Activated CD4-positive, alpha-beta T cell treated with anti-CD3 and anti-CD28 coated beads for 36 hours (primary cell): ENCODE measurements at regions of chr18 and their contacts with region 1.

Region 1: DNA sequence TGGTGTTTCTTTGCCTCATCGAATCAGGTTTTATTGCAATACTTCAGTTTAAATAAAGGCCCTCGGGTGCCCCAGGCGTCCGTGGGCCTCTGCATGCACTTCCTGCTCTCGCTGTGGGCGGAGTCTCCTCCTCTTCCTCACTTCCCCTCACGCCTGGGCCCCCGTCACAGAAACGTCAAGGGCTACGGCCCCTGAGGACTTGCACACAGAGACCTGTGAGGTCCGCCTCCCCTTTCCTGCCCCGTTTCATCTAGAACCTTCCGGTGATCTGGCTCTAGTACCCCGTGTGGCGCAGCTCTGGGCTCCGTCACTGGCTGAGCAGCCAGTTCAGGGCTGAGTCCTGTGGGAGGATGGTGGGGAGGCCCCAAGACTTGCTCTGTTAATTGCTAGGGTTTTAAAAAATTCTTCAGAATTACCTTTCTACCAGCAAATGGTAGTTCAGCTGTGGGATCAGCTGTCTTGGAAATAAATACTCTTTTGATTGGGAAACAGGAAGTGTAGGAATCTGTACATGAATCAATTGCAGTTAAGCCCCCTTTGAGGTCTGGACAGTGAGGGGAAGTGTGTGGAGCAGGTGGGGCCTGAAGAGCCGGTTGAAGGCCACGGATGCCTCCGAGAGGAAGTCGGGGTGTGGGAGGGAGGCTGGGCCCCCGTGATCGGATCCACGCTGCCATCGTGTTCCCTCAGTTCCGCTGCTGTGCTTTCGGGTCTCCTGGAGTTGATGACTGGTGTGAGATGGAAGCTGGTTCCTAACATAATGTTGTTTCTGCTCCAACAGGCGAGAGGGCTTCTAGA is 10.2 kb downstream of the NFATC1 start:
- DNase-seq: peak; percentile 94
- ATAC-seq: peak; percentile 86
- H3K4me3 Mint-ChIP-seq: peak overlapping the region; percentile 83
- H3K27ac Mint-ChIP-seq: peak overlapping the region; percentile 96
- H3K4me1 Mint-ChIP-seq: peaks cover 65% of the 10 kb centered on the region
- H3K27me3 Mint-ChIP-seq: no peaks in the 10 kb centered on the region

Region 2: GRCh38 chr18:78701771-78702396 is 704.1 kb before region 1 on chr18:
- CTCF ChIA-PET with region 1: no interaction called
- POLR2A ChIA-PET with region 1: no interaction called
- intact Hi-C with region 1: no loop called
- DNase-seq: no peak
- ATAC-seq: no peak
- H3K4me3 Mint-ChIP-seq: no peak overlapping the region
- H3K27ac Mint-ChIP-seq: no peak overlapping the region
- H3K4me1 Mint-ChIP-seq: no peaks in the 10 kb centered on the region
- H3K27me3 Mint-ChIP-seq: peaks cover 10% of the 10 kb centered on the region

Region 3: DNA sequence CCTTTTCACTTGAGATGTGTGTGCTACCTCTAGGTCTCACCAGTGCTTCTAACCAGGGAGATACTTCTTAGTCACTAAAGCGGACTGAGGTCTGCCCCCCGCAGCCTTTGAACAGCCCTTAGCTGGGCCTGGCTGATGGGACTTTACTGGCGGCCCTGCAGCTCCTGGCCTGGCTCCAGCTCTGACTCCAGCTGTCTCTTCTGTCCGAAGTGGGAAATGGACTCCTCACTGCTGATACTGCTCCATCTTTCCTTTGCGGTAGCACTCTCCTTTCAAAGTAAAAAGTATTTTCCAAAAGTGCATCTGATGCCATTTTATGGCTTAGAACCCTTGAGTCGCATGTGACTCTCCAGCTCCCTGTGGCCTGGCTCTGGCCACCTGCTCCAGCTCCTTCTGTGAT is 272.3 kb before region 1 on chr18:
- CTCF ChIA-PET with region 1: no interaction called
- POLR2A ChIA-PET with region 1: no interaction called
- intact Hi-C with region 1: no loop called
- DNase-seq: no peak
- ATAC-seq: no peak
- H3K4me3 Mint-ChIP-seq: no peak overlapping the region
- H3K27ac Mint-ChIP-seq: no peak overlapping the region
- H3K4me1 Mint-ChIP-seq: peaks cover 2% of the 10 kb centered on the region
- H3K27me3 Mint-ChIP-seq: no peaks in the 10 kb centered on the region

Region 4: DNA sequence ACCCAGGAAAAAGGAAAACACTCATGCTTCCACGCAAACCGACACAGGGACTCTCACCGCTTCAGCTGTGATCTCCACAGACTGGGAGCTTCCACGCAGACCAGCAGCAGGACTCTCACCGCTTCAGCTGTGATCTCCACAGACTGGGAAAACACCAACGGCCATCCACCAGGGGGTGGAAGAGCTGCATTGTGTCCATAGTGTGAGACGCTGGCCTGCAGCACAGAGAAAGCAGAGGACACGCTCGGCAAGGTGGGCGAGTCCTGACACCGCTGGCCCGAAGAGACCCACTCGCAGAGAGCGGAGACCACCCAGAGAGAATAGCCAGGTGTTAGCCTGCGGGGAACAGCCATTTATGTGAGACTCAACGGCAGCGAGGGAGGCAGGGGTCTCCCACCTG is 52.7 kb before region 1 on chr18:
- CTCF ChIA-PET with region 1: no interaction called
- POLR2A ChIA-PET with region 1: no interaction called
- intact Hi-C with region 1: no loop called
- DNase-seq: no peak
- ATAC-seq: no peak
- H3K4me3 Mint-ChIP-seq: no peak overlapping the region
- H3K27ac Mint-ChIP-seq: no peak overlapping the region
- H3K4me1 Mint-ChIP-seq: no peaks in the 10 kb centered on the region
- H3K27me3 Mint-ChIP-seq: no peaks in the 10 kb centered on the region

Region 5: DNA sequence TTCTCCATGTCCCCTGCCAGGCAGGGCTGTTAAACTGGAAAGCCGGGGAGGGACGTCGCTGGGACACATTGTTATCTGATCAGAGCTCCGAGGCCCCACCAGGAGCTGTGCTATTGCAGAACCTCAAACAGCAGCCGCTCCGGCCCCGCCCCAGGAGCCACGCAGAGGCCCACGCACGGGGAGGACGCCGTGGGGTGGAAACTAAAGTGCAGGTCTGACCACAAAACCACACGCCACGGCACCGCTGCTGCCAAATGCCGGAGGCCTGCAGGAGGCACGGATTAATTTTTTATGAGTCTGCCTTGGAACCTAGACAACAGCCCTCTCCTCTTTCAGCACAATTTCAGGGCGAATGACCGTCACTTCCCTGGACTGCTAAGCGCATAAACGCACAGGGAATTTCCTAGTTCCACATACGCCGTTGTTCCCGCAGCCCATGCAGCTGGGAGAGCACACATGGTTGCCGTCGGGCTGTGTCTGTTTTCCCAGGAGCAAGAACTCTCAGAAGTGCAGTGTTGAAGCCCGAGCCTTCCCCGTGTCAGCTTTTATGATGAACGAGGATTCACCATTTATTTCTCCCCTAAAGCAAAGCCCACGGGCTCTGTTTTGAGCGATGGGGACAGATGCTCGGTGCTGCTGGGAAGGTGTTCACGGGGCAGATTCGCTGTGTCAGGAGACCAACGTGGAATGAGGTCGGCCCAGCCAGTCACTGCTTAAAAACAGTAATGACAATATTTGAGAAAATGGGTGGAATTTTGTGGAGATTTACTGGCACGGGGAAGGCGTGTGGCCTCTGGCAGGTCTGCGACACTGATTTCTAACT is 33.4 kb after region 1 on chr18:
- CTCF ChIA-PET with region 1: interaction called, 7 read pairs
- POLR2A ChIA-PET with region 1: interaction called, 10 read pairs
- intact Hi-C with region 1: loop called (anchors 1 to 2 kb)
- DNase-seq: peak; percentile 61
- ATAC-seq: no peak
- H3K4me3 Mint-ChIP-seq: no peak overlapping the region
- H3K27ac Mint-ChIP-seq: peak overlapping the region; percentile 65
- H3K4me1 Mint-ChIP-seq: peaks cover 61% of the 10 kb centered on the region
- H3K27me3 Mint-ChIP-seq: no peaks in the 10 kb centered on the region

Region 6: GRCh38 chr18:79679111-79679872 is 273.3 kb after region 1 on chr18 and contains the start of gene CTDP1:
- CTCF ChIA-PET with region 1: interaction called, 3 read pairs
- POLR2A ChIA-PET with region 1: interaction called, 3 read pairs
- intact Hi-C with region 1: loop called in 1 of 2 experiments (anchors 1 kb)
- DNase-seq: peak; percentile 99
- ATAC-seq: peak; percentile 91
- H3K4me3 Mint-ChIP-seq: peak within 1 kb of the TSS; percentile 90
- H3K27ac Mint-ChIP-seq: peak within 1 kb of the TSS; percentile 97
- H3K4me1 Mint-ChIP-seq: peaks cover 65% of the 10 kb centered on the region
- H3K27me3 Mint-ChIP-seq: no peaks in the 10 kb centered on the region
- total RNA-seq, gene CTDP1: 36.7 to 45.5 TPM

Region 7: DNA sequence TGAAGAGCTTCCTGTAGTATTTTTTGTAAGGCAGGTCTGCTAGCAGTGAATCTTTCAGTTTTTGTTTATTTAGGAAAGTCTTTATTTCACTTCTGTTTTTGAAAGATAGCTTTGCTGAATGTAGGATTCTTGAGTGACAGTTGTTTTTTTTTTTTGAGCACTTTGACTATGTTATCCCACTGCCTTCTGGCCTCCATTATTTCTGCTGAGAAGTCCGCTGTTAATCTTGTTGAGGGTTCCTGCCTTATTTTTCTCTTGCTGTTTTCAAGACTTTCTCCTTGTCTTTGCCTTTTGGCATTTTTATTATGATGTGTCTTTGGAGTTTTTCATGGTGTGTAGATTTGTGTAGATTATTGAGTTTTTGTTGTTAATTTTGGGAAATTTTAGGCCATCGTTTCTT is 650.1 kb after region 1 on chr18:
- CTCF ChIA-PET with region 1: no interaction called
- POLR2A ChIA-PET with region 1: no interaction called
- intact Hi-C with region 1: no loop called
- DNase-seq: no peak
- ATAC-seq: no peak
- H3K4me3 Mint-ChIP-seq: no peak overlapping the region
- H3K27ac Mint-ChIP-seq: no peak overlapping the region
- H3K4me1 Mint-ChIP-seq: no peaks in the 10 kb centered on the region
- H3K27me3 Mint-ChIP-seq: no peaks in the 10 kb centered on the region